Mammary epithelial cell (primary cell): ENCODE measurements at regions of chr6 and their contacts with region 1.

Region 1: GRCh38 chr6:3251462-3252314 is 7.1 kb upstream of the PSMG4 start:
- DNase-seq: peak; percentile 72
- H3K4me3 ChIP-seq: no peak overlapping the region
- H3K27ac ChIP-seq: no peak overlapping the region
- H3K4me1 ChIP-seq: peaks cover 16% of the 10 kb centered on the region
- H3K27me3 ChIP-seq: no peaks in the 10 kb centered on the region
- CTCF ChIP-seq: peak; percentile 97 to 99

Region 2: GRCh38 chr6:2999618-3000557 is 251.8 kb before region 1 on chr6 and contains the start of gene NQO2:
- CTCF ChIA-PET with region 1: no interaction called
- dilution Hi-C with region 1: no loop called
- in situ Hi-C with region 1: loop called in 1 of 2 experiments (anchors 10 kb)
- intact Hi-C with region 1: loop called (anchors 5 kb)
- DNase-seq: no peak
- H3K4me3 ChIP-seq: peak within 1 kb of the TSS; percentile 62 to 94 (median 80)
- H3K27ac ChIP-seq: peak within 1 kb of the TSS; percentile 47
- H3K4me1 ChIP-seq: peaks cover 22% of the 10 kb centered on the region
- H3K27me3 ChIP-seq: no peaks in the 10 kb centered on the region
- CTCF ChIP-seq: peak in 1 of 2 donors; percentile 6
- total RNA-seq, gene NQO2: 17.0 to 20.3 TPM

Region 3: DNA sequence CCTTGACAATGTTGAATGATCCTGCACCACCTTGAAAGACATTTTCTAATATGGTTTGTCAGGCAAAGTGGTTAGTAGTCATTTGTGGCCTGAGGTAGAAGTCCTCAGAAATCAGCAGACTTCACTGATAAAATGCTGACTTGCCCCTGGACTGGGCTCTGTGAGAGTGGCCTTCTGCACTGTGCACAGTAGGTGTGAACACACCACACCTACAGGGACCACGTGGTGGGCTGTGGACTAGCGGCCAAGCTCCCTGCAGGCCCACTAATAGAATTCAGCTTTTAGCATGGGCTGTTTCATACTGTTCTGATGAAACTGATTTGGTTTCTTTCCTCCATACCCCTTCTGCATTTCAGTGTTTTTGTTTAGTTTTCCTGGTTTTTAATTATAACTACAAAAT is 125.9 kb before region 1 on chr6:
- CTCF ChIA-PET with region 1: no interaction called
- dilution Hi-C with region 1: no loop called
- in situ Hi-C with region 1: loop called (anchors 5 kb)
- intact Hi-C with region 1: loop called (anchors 1 kb)
- DNase-seq: no peak
- H3K4me3 ChIP-seq: no peak overlapping the region
- H3K27ac ChIP-seq: no peak overlapping the region
- H3K4me1 ChIP-seq: no peaks in the 10 kb centered on the region
- H3K27me3 ChIP-seq: no peaks in the 10 kb centered on the region
- CTCF ChIP-seq: no peak

Region 4: GRCh38 chr6:3157131-3157927 is 94.4 kb before region 1 on chr6 and contains the start of gene TUBB2A:
- CTCF ChIA-PET with region 1: no interaction called
- dilution Hi-C with region 1: no loop called
- in situ Hi-C with region 1: loop called in 1 of 2 experiments (anchors 10 kb)
- intact Hi-C with region 1: loop called (anchors 1 kb)
- DNase-seq: peak; percentile 80
- H3K4me3 ChIP-seq: peak within 1 kb of the TSS; percentile 74 to 92 (median 81)
- H3K27ac ChIP-seq: peak within 1 kb of the TSS; percentile 80
- H3K4me1 ChIP-seq: peaks cover 5% of the 10 kb centered on the region
- H3K27me3 ChIP-seq: no peaks in the 10 kb centered on the region
- CTCF ChIP-seq: peak; percentile 14 to 55
- total RNA-seq, gene TUBB2A: 70.2 to 214 TPM

Region 5: DNA sequence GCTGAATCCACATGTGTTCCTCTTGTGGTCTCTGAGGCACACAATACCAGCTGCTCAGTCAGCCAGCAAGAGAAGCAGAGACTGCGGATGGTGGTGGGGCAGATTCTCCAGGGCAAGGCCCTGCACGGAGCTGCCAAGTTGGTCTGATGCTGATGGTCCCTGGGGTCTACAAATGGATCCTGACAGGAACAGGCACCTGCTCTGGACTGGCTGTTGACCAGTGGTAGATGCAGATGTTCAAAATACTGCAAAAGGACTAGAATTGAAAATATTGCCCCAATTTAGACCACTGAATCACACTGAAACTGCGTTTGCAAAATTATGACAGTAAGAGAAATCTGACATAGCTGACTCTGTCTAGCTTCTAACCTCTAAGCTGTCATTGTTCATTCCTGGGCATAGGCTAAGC is 64.7 kb before region 1 on chr6:
- CTCF ChIA-PET with region 1: no interaction called
- dilution Hi-C with region 1: loop called (anchors 10 kb)
- in situ Hi-C with region 1: no loop called
- intact Hi-C with region 1: no loop called
- DNase-seq: no peak
- H3K4me3 ChIP-seq: no peak overlapping the region
- H3K27ac ChIP-seq: no peak overlapping the region
- H3K4me1 ChIP-seq: no peaks in the 10 kb centered on the region
- H3K27me3 ChIP-seq: no peaks in the 10 kb centered on the region
- CTCF ChIP-seq: no peak

Region 6: GRCh38 chr6:3456755-3457466 is 205.2 kb after region 1 on chr6 and contains the start of gene SLC22A23:
- CTCF ChIA-PET with region 1: no interaction called
- dilution Hi-C with region 1: no loop called
- in situ Hi-C with region 1: no loop called
- intact Hi-C with region 1: no loop called
- DNase-seq: peak; percentile 60
- H3K4me3 ChIP-seq: peak within 1 kb of the TSS; percentile 82 to 93 (median 88)
- H3K27ac ChIP-seq: peak within 1 kb of the TSS; percentile 29
- H3K4me1 ChIP-seq: peaks cover 26% of the 10 kb centered on the region
- H3K27me3 ChIP-seq: no peaks in the 10 kb centered on the region
- CTCF ChIP-seq: peak; percentile 37 to 65
- total RNA-seq, gene SLC22A23: 34.0 to 49.3 TPM